Activated CD4-positive, alpha-beta T cell treated with anti-CD3 and anti-CD28 coated beads for 36 hours (primary cell): ENCODE measurements at regions of chr2 and their contacts with region 1.

Region 1: DNA sequence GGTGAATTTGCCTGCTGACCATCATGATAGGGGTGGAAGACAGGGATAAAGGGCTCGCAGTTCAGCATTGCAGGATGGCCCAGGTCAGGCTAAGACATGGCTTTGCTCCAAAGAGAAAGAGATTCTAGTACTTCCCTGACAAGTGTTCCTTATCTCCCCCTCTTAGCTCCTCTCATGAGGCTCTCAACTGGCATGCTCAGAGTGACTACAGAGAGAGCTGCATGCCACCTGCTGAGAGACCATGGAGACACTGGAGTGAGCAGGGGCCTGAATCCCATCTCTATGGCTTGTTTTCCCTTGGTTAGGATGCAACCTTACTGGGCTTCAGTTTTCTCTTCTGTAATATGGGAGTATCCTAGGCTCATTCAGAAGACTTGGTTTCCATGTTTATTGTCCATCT is 94.3 kb downstream of the ARHGAP15 start:
- DNase-seq: no peak
- ATAC-seq: no peak
- H3K4me3 Mint-ChIP-seq: no peak overlapping the region
- H3K27ac Mint-ChIP-seq: no peak overlapping the region
- H3K4me1 Mint-ChIP-seq: peaks cover 47% of the 10 kb centered on the region
- H3K27me3 Mint-ChIP-seq: no peaks in the 10 kb centered on the region

Region 2: GRCh38 chr2:142603759-142604158 is 619.8 kb before region 1 on chr2:
- CTCF ChIA-PET with region 1: no interaction called
- POLR2A ChIA-PET with region 1: no interaction called
- intact Hi-C with region 1: no loop called
- DNase-seq: no peak
- ATAC-seq: no peak
- H3K4me3 Mint-ChIP-seq: no peak overlapping the region
- H3K27ac Mint-ChIP-seq: no peak overlapping the region
- H3K4me1 Mint-ChIP-seq: no peaks in the 10 kb centered on the region
- H3K27me3 Mint-ChIP-seq: no peaks in the 10 kb centered on the region

Region 3: GRCh38 chr2:142877216-142877756 is 346.3 kb before region 1 on chr2 and contains the start of gene KYNU:
- CTCF ChIA-PET with region 1: no interaction called
- POLR2A ChIA-PET with region 1: no interaction called
- intact Hi-C with region 1: no loop called
- DNase-seq: no peak
- ATAC-seq: no peak
- H3K4me3 Mint-ChIP-seq: no peak within 1 kb of the TSS
- H3K27ac Mint-ChIP-seq: no peak within 1 kb of the TSS
- H3K4me1 Mint-ChIP-seq: no peaks in the 10 kb centered on the region
- H3K27me3 Mint-ChIP-seq: no peaks in the 10 kb centered on the region
- total RNA-seq, gene KYNU: not detected

Region 4: DNA sequence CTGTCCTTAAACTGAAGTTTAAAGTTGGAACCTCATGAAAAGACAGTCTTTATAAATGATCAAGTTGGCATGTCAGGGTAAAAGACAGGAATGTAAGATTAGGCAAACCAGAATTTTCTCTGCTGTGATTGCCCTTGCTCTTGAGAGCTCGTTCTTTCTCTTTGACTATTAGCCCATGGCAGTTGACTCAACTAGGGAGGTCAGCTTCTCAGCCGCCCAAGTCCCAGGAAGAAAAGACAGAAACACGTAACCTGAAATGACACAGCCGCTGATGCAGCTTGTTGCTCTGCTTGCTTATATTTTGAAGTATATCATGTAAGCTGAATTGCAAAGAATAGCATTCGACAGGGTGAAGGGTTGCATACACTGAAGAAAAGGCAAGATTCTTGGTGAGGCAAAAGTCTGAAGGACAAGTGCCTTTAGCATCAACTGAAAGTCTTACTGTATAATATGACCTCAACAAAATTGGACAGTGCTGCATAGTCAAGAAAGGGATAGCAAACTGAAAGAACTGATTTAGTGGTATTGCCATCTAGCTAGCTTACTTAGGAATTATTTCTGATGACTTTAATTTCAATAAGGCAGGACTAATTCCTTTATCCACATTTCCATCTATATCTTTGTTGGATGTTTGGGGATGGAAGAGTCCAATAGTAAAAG is 39.6 kb before region 1 on chr2:
- CTCF ChIA-PET with region 1: interaction called, 11 read pairs
- POLR2A ChIA-PET with region 1: no interaction called
- intact Hi-C with region 1: no loop called
- DNase-seq: no peak
- ATAC-seq: peak; percentile 30
- H3K4me3 Mint-ChIP-seq: no peak overlapping the region
- H3K27ac Mint-ChIP-seq: no peak overlapping the region
- H3K4me1 Mint-ChIP-seq: peaks cover 45% of the 10 kb centered on the region
- H3K27me3 Mint-ChIP-seq: no peaks in the 10 kb centered on the region

Region 5: GRCh38 chr2:143371616-143372015 is 148.1 kb after region 1 on chr2:
- CTCF ChIA-PET with region 1: no interaction called
- POLR2A ChIA-PET with region 1: no interaction called
- intact Hi-C with region 1: no loop called
- DNase-seq: no peak
- ATAC-seq: no peak
- H3K4me3 Mint-ChIP-seq: no peak overlapping the region
- H3K27ac Mint-ChIP-seq: no peak overlapping the region
- H3K4me1 Mint-ChIP-seq: peaks cover 13% of the 10 kb centered on the region
- H3K27me3 Mint-ChIP-seq: no peaks in the 10 kb centered on the region